Mammary epithelial cell (primary cell): ENCODE measurements at regions of chr2 and their contacts with region 1.

Region 1: GRCh38 chr2:191165176-191165643 is 14.4 kb upstream of the STAT4 start:
- DNase-seq: peak; percentile 58
- H3K4me3 ChIP-seq: no peak overlapping the region
- H3K27ac ChIP-seq: peak overlapping the region; percentile 99
- H3K4me1 ChIP-seq: peaks cover 47% of the 10 kb centered on the region
- H3K27me3 ChIP-seq: no peaks in the 10 kb centered on the region
- CTCF ChIP-seq: peak; percentile 73 to 75

Region 2: DNA sequence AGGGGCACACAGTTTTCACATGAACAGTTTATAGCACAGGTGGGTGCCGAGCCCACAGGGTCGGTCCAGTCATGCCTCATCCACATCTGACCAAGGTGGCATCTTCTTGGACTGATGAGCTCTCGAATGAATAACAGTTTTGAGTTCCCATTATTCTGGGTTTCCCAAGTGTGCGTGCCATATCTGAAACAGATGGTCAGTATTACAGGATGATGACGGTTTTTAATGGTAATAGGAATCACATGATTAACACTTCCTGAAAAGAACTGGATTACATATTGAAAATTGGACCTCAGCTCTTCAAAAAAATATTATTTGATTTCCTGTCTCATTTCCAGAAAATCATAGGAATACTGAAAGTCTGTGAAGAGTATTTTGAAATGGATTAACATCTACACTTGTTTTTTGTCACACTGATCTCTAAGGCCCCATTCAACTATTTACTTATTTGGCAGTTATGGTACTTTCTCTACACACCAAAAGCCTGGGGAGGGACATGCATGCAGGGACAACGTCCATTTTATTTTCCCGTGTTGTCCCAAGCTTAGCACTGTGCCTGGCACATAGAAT is 538.5 kb before region 1 on chr2:
- CTCF ChIA-PET with region 1: no interaction called
- dilution Hi-C with region 1: no loop called
- in situ Hi-C with region 1: no loop called
- intact Hi-C with region 1: no loop called
- DNase-seq: no peak
- H3K4me3 ChIP-seq: no peak overlapping the region
- H3K27ac ChIP-seq: no peak overlapping the region
- H3K4me1 ChIP-seq: peaks cover 7% of the 10 kb centered on the region
- H3K27me3 ChIP-seq: no peaks in the 10 kb centered on the region
- CTCF ChIP-seq: no peak

Region 3: GRCh38 chr2:190792956-190793888 is 372.0 kb before region 1 on chr2:
- CTCF ChIA-PET with region 1: no interaction called
- dilution Hi-C with region 1: no loop called
- in situ Hi-C with region 1: no loop called
- intact Hi-C with region 1: no loop called
- DNase-seq: no peak
- H3K4me3 ChIP-seq: no peak overlapping the region
- H3K27ac ChIP-seq: peak overlapping the region; percentile 41
- H3K4me1 ChIP-seq: peaks cover 24% of the 10 kb centered on the region
- H3K27me3 ChIP-seq: no peaks in the 10 kb centered on the region
- CTCF ChIP-seq: no peak

Region 4: DNA sequence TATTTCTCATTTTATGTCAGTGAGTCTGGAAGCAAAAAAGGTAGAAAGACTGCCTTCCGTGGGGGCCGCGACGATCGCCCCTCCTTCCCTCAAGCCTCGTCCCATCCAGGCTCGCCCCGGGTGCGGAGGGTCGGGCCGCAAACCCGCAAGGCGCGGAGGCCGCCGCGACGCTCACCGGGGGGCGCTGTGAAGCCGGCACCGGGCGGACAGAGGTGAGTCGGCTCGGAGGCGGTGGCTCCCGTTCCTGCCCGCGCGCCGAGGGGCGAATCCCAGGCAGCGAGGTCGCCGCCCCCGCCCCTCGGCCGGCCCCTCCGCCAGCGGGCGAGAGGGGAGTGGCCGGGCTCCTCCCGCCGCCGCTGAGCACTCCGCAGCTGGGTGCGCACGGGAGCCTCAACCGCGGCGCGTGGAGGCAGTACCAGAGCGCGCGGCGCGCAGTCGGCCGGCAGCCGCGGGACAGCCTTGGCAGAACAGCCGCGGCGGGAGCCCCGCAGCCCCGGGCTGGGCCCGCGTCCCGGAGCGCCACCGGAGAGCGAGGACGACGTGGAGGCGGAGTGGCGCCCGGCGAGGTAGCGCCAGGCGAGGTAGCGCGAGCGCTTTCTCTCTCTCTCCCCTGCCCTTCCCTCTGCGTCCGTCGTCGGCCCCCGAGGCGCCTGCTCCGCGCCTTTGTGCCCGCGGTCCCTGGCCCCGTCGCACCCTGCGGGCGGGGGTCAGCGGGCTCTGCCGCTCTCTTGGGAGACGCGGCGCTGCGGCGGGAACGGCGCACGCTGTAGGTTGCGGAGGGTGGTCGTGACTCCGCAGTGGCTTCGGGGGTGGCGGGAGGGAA is 80.0 kb after region 1 on chr2 and contains the start of gene MYO1B:
- CTCF ChIA-PET with region 1: no interaction called
- dilution Hi-C with region 1: no loop called
- in situ Hi-C with region 1: loop called (anchors 5 to 10 kb)
- intact Hi-C with region 1: loop called (anchors 1 kb)
- DNase-seq: peak; percentile 89
- H3K4me3 ChIP-seq: peak within 1 kb of the TSS; percentile 62 to 95 (median 79)
- H3K27ac ChIP-seq: peak within 1 kb of the TSS; percentile 88
- H3K4me1 ChIP-seq: peaks cover 31% of the 10 kb centered on the region
- H3K27me3 ChIP-seq: no peaks in the 10 kb centered on the region
- CTCF ChIP-seq: peak; percentile 33 to 71
- total RNA-seq, gene MYO1B: 165 to 435 TPM

Region 5: GRCh38 chr2:191345788-191346187 is 180.6 kb after region 1 on chr2:
- CTCF ChIA-PET with region 1: no interaction called
- dilution Hi-C with region 1: no loop called
- in situ Hi-C with region 1: no loop called
- intact Hi-C with region 1: loop called (anchors 2 kb)
- DNase-seq: peak; percentile 43
- H3K4me3 ChIP-seq: no peak overlapping the region
- H3K27ac ChIP-seq: no peak overlapping the region
- H3K4me1 ChIP-seq: peaks cover 14% of the 10 kb centered on the region
- H3K27me3 ChIP-seq: no peaks in the 10 kb centered on the region
- CTCF ChIP-seq: no peak

Region 6: DNA sequence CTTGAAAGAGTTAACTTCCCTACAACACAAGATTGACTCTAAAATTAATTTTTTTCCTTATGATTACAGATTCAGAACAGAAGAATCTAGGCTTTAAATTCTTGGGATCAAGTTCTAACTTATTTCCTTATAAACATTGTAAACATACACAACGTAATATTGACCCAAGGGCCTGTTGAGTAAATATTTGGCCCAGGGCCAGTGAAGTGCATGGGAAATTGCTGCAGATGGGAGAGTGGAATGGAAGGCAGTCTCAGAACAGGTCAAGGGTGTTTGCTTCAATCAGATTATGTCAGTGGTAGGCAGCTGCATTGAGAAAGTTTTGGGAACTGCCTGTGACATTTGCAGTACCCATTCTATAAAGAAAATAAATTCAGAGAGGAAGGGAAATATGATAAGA is 217.6 kb after region 1 on chr2:
- CTCF ChIA-PET with region 1: interaction called, 4 read pairs
- dilution Hi-C with region 1: no loop called
- in situ Hi-C with region 1: loop called in 1 of 2 experiments (anchors 10 kb)
- intact Hi-C with region 1: no loop called
- DNase-seq: peak; percentile 23
- H3K4me3 ChIP-seq: no peak overlapping the region
- H3K27ac ChIP-seq: no peak overlapping the region
- H3K4me1 ChIP-seq: peaks cover 27% of the 10 kb centered on the region
- H3K27me3 ChIP-seq: no peaks in the 10 kb centered on the region
- CTCF ChIP-seq: no peak